HepG2 (cell line): ENCODE measurements at regions of chr4 and their contacts with region 1.

Region 1: DNA sequence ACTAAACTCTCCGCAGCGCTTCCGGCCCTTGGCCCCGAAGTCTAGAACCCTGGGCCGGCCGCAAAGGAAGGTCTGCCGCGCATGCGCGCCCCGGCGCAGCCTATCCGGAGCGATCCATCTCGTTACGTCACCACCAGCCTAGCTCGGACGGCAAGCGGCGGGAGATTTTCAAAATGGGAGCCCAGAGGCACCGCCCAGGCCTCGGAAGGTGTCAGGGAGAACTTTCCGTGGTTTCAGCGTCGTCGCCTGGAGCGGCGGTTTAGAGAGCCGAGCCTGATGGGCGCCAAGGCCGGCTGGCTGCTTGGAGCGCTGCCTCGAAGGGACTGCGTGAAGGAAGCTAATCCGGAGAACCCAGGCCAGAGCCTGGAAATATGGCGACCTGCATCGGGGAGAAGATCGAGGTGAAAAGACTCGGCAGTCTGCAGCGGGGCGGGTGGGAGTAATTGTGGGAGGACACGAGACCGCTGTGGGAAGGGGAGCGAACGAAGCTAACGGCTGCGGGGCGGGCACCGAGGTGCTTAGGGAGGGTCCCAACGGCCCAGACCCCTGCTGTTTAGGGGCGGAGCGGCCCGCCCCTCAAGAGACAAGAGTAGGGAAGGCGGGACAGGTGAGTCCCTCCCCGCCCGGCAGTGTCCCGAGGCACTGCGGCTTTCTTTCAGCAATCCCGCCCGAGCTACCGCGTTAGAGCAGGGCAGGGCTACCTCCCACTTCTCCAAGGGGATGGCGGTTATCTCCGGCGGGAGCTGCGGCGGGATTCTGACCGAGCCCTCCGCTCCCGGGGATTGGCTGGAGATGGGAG is at the start of gene PLK4:
- DNase-seq: peak; percentile 91
- ATAC-seq: peak; percentile 95
- H3K4me3 ChIP-seq: peak within 1 kb of the TSS; percentile 75 to 92 (median 90)
- H3K27ac ChIP-seq: peak within 1 kb of the TSS; percentile 86
- H3K4me1 ChIP-seq: peaks cover 22% of the 10 kb centered on the region
- H3K27me3 ChIP-seq: no peaks in the 10 kb centered on the region
- CTCF ChIP-seq: no peak
- EP300 ChIP-seq: no peak
- POLR2A ChIP-seq: peak; percentile 24 to 77
- RAD21 ChIP-seq: peak; percentile 12; the same call in 1 of the 2 replicates
- total RNA-seq, gene PLK4: 46.1 and 52.4 TPM in 2 replicates

Region 2: DNA sequence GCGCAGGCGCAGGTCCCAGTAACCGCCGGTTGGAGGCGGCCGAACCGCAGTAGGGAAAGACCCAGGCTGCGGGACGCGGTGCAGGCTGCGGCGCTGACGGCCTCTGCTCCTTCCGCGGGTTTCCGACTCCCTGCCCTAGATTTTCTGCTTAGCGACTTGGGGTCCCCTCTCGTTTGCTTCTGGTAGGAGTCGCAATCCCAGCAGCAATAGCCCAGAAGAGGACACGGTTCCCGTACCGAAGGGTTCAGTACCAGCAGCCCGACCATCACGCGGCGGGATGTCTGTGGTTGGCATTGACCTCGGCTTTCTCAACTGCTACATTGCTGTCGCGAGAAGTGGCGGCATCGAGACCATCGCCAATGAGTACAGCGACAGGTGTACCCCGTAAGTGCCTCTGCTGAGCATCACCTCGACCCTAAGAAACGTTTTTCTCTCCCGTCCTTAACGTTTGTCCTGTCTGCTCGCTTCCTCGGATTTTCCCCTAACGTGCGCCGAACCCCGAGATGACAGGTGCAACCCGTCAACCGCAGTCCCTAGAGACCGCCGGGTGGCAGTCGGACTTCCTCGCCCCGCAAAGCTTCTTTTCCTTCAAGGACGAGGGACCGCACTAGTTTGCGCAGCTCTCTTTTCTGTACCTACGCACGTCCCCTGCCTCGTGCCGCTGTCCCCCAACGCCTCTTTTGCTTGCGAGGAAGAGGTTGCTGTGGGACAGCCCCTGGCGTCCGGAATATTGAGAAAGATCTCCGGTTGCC is 98.5 kb before region 1 on chr4 and contains the start of gene HSPA4L:
- CTCF ChIA-PET with region 1: no interaction called
- POLR2A ChIA-PET with region 1: no interaction called
- in situ Hi-C with region 1: no loop called
- intact Hi-C with region 1: loop called (anchors 10 kb)
- DNase-seq: peak; percentile 68
- ATAC-seq: peak; percentile 95
- H3K4me3 ChIP-seq: peak within 1 kb of the TSS; percentile 69 to 88 (median 82)
- H3K27ac ChIP-seq: peak within 1 kb of the TSS; percentile 69
- H3K4me1 ChIP-seq: peaks cover 27% of the 10 kb centered on the region
- H3K27me3 ChIP-seq: no peaks in the 10 kb centered on the region; a peak in 1 of 5 replicates
- CTCF ChIP-seq: peak; percentile 62
- EP300 ChIP-seq: no peak
- POLR2A ChIP-seq: peak; percentile 90 to 94
- RAD21 ChIP-seq: peak; percentile 41
- total RNA-seq, gene HSPA4L: 31.5 and 61.8 TPM in 2 replicates

Region 3: GRCh38 chr4:127857641-127858040 is 23.3 kb before region 1 on chr4:
- CTCF ChIA-PET with region 1: no interaction called
- POLR2A ChIA-PET with region 1: no interaction called
- in situ Hi-C with region 1: no loop called
- intact Hi-C with region 1: no loop called
- DNase-seq: no peak
- ATAC-seq: no peak
- H3K4me3 ChIP-seq: no peak overlapping the region
- H3K27ac ChIP-seq: no peak overlapping the region
- H3K4me1 ChIP-seq: peaks cover 11% of the 10 kb centered on the region
- H3K27me3 ChIP-seq: no peaks in the 10 kb centered on the region
- CTCF ChIP-seq: no peak
- EP300 ChIP-seq: no peak
- POLR2A ChIP-seq: no peak
- RAD21 ChIP-seq: no peak

Region 4: DNA sequence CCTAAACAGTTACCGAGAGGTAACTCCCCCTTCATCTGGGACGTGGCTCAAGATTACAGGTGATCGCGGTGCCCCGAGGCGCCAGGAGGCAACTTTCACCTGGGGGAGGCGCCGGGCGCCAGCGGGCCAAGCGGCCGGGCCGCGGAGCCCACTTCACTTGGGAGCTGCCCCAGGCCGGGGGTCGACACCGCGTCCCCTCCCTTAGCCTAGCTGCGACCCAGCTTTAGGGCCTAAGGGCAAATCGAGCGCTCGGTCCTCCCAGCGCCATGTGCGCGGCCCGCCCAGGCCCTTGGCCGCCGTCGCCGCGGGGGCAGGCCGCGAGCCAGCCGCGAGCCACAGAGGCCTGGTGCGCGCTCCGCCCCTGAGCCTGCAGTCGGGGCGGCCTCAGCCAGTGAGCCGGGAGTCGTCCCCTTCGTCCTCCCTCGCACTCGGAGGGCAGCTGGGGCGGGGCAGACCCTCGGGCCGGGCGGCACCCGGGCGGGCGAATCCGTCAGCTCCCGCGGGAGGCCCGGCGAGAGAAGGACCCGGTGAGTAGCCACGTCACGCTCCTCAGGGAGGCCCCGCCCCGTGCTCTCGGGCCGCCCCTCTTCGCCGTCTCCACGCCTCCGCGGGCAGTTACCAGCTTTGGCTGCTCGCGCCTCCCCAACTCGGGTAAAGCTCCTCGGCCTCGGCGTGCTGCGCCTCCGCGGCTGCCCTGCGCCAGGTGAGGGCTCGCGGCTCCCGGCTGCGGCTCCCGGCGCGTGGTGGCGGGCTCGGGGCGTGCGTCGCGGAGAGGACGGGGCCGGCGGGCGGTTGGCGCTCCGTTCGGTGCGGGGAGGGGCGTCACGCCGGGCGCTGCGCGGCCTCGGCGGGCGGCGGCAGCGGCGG is 180.0 kb after region 1 on chr4 and contains the start of gene LARP1B:
- CTCF ChIA-PET with region 1: no interaction called
- POLR2A ChIA-PET with region 1: interaction called, 9 read pairs
- in situ Hi-C with region 1: no loop called
- intact Hi-C with region 1: loop called (anchors 1 kb)
- DNase-seq: peak; percentile 91
- ATAC-seq: peak; percentile 92
- H3K4me3 ChIP-seq: peak within 1 kb of the TSS; percentile 71 to 94 (median 91)
- H3K27ac ChIP-seq: peak within 1 kb of the TSS; percentile 99
- H3K4me1 ChIP-seq: peaks cover 40% of the 10 kb centered on the region
- H3K27me3 ChIP-seq: no peaks in the 10 kb centered on the region
- CTCF ChIP-seq: peak; percentile 16; the same call in 1 of the 2 replicates
- EP300 ChIP-seq: no peak
- POLR2A ChIP-seq: peak; percentile 92 to 94
- RAD21 ChIP-seq: peak; percentile 77; the same call in 1 of the 2 replicates
- total RNA-seq, gene LARP1B: 52.7 and 57.1 TPM in 2 replicates